ENCODE measurements at regions of chr5 and their contacts with region 1.

Region 1: DNA sequence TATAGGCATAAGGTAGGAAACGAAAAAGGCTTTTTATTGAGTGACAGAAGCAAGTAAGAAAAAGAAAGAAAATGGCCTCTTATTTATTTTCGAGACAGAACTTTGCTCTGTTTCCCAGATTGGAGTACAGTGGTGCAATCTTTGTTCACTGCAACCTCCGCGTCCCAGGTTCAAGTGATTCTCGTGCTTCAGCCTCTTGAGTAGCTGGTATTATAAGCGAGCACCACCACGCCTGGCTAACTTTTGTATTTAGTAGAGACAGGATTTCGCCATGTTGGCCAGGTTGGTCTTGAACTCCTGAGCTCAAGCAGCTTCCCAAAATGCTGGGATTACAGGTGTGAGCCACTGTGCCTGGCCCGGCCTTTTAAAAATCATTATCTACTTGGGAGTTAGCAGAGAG is 70.7 kb downstream of the NSD1 start:
- DNase-seq: no peak
- H3K4me3 ChIP-seq: no peak overlapping the region
- H3K27ac ChIP-seq: no peak overlapping the region
- H3K4me1 ChIP-seq: no peaks in the 10 kb centered on the region
- H3K27me3 ChIP-seq: no peaks in the 10 kb centered on the region
- CTCF ChIP-seq: no peak
- POLR2A ChIP-seq: no peak

Region 2: DNA sequence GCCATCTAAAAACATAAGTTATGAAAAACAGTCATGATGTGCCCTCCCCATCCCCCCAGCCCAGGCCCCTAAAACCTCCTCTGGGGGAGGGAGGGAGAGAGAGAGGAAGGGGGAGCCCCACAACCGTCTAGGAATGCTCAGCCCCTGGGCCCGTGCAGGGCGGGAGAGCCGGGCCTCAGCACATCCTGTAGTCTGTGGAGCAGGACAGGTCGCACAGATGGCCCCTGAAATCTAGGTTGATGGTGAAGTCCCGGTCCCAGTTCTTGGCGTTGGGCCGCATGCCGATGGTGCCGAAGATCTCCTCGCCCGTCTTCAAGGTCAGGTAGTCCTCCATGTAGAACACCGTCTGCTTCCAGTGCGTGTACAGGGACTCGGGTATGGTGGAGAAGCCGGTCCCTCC is 61.1 kb after region 1 on chr5:
- intact Hi-C with region 1: loop called (anchors 2 kb)
- DNase-seq: no peak
- H3K4me3 ChIP-seq: no peak overlapping the region
- H3K27ac ChIP-seq: no peak overlapping the region
- H3K4me1 ChIP-seq: no peaks in the 10 kb centered on the region
- H3K27me3 ChIP-seq: no peaks in the 10 kb centered on the region
- CTCF ChIP-seq: no peak
- POLR2A ChIP-seq: no peak

Measured in breast epithelium (tissue), 4 donors.